Heart left ventricle (tissue), 16 donors: ENCODE measurements at regions of chr10 and their contacts with region 1.

Region 1: GRCh38 chr10:122565728-122566206 is 5.2 kb downstream of the DMBT1 start:
- DNase-seq: peak; percentile 68 to 82 (median 76)
- ATAC-seq: peak; percentile 53 to 74 (median 56)
- H3K4me3 ChIP-seq: peak overlapping the region in 7 of 12 donors; percentile 11 to 26 (median 19)
- H3K27ac ChIP-seq: no peak overlapping the region
- H3K4me1 ChIP-seq: peaks cover 0 to 10% (median under 1%) of the 10 kb centered on the region in 12 donors
- H3K27me3 ChIP-seq: peaks cover 0 to 11% (median 0%) of the 10 kb centered on the region in 9 donors
- CTCF ChIP-seq: peak; percentile 74 to 91 (median 84)
- POLR2A ChIP-seq: no peak

Region 2: GRCh38 chr10:122342293-122343134 is 223.3 kb before region 1 on chr10:
- intact Hi-C with region 1: loop called (anchors 2 to 10 kb)
- DNase-seq: peak in 2 of 5 donors; percentile 43 to 44
- ATAC-seq: peak in 2 of 4 donors; percentile 38 to 46
- H3K4me3 ChIP-seq: no peak overlapping the region
- H3K27ac ChIP-seq: peak overlapping the region in 7 of 12 donors; percentile 30 to 79 (median 69)
- H3K4me1 ChIP-seq: peaks cover 0 to 39% (median 8%) of the 10 kb centered on the region in 12 donors
- H3K27me3 ChIP-seq: no peaks in the 10 kb centered on the region
- CTCF ChIP-seq: peak; percentile 75 to 92 (median 82)
- POLR2A ChIP-seq: no peak

Region 3: GRCh38 chr10:122446668-122447423 is 118.9 kb before region 1 on chr10:
- intact Hi-C with region 1: loop called in 3 of 10 experiments (anchors 5 to 10 kb)
- DNase-seq: no peak
- ATAC-seq: peak; percentile 64 to 89 (median 80)
- H3K4me3 ChIP-seq: no peak overlapping the region
- H3K27ac ChIP-seq: peak overlapping the region in 3 of 12 donors; percentile 15 to 39 (median 39)
- H3K4me1 ChIP-seq: peaks cover 0 to 35% (median 7%) of the 10 kb centered on the region in 12 donors
- H3K27me3 ChIP-seq: no peaks in the 10 kb centered on the region
- CTCF ChIP-seq: no peak
- POLR2A ChIP-seq: no peak

Region 4: GRCh38 chr10:122474131-122474818 is 91.5 kb before region 1 on chr10:
- intact Hi-C with region 1: loop called in 3 of 10 experiments (anchors 5 to 10 kb)
- DNase-seq: peak in 2 of 5 donors; percentile 52 to 55
- ATAC-seq: peak; percentile 41 to 71 (median 60)
- H3K4me3 ChIP-seq: peak overlapping the region in 5 of 12 donors; percentile 1 to 26 (median 17)
- H3K27ac ChIP-seq: peak overlapping the region in 10 of 12 donors; percentile 23 to 83 (median 61)
- H3K4me1 ChIP-seq: peaks cover 3 to 62% (median 49%) of the 10 kb centered on the region in 12 donors
- H3K27me3 ChIP-seq: no peaks in the 10 kb centered on the region
- CTCF ChIP-seq: no peak
- POLR2A ChIP-seq: no peak

Region 5: GRCh38 chr10:122703439-122704118 is 137.8 kb after region 1 on chr10:
- intact Hi-C with region 1: loop called (anchors 5 to 10 kb)
- DNase-seq: peak; percentile 65 to 80 (median 76)
- ATAC-seq: peak; percentile 79 to 97 (median 93)
- H3K4me3 ChIP-seq: no peak overlapping the region
- H3K27ac ChIP-seq: no peak overlapping the region
- H3K4me1 ChIP-seq: peaks cover 0 to 10% (median 0%) of the 10 kb centered on the region in 12 donors
- H3K27me3 ChIP-seq: no peaks in the 10 kb centered on the region
- CTCF ChIP-seq: peak; percentile 70 to 94 (median 86)
- POLR2A ChIP-seq: no peak